ENCODE measurements at regions of chr5 and their contacts with region 1.

Region 1: GRCh38 chr5:73792687-73793320 is 166.8 kb downstream of the ARHGEF28 start:
- DNase-seq: peak; percentile 87

Region 2: DNA sequence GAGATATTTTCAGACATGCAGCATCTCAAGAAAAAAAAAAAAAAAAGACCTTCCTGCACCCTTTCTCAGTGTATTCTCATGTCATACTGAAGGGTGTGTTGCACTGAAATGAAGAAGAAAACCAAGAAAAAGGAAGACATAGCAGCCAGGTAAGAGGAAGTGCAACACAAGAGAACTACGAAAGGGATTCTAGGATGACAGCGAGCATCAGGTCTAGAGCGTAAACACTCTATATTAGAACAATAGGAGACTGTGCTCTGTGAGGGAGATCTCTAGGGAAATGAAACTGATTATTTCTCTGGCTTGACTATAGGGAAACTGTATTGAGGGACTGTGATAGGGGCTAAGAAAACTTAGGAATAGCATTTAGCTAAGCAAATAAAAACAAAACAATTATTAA is 264.6 kb before region 1 on chr5:
- intact Hi-C with region 1: loop called in 1 of 2 experiments (anchors 5 kb)
- DNase-seq: no peak

Region 3: DNA sequence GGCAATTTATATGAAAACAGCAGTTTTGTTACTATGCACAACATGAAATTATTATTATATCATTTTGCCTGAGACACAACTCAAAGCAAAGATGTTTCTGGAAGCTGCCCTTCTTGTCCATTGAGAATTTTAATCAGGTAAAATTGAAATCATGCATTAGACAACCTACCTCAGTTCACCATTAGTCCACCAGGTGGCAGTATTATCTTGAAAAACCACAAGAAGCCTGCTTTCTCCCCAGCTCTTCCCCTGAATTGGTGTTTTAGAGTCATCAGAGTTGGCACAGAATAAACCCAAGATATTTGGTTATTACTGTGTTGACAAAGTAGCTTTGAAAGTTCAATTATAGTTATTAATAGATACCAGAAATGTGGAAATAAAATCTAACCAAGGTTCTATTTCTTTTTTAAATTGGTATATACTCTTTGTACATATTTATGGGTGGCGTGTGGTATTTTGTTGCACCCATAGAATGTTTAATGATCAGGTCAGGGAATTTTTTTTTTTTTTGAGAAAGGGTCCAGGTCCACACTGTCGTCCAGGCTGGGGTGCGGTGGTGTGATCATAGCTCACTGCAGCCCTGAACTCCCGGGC is 201.6 kb before region 1 on chr5:
- intact Hi-C with region 1: loop called (anchors 5 kb)
- DNase-seq: no peak

Region 4: GRCh38 chr5:73777192-73777591 is 15.6 kb before region 1 on chr5:
- intact Hi-C with region 1: loop called in 1 of 2 experiments (anchors 2 kb)
- DNase-seq: no peak